Spleen (tissue), 13 donors: ENCODE measurements at regions of chr1 and their contacts with region 1.

Region 1: GRCh38 chr1:153572569-153573015 is 6.9 kb upstream of the S100A2 start:
- DNase-seq: peak; percentile 91
- H3K4me3 ChIP-seq: no peak overlapping the region
- H3K27ac ChIP-seq: peak overlapping the region; percentile 29 to 71 (median 54)
- H3K4me1 ChIP-seq: peaks cover 18 to 54% (median 30%) of the 10 kb centered on the region in 6 donors
- H3K27me3 ChIP-seq: peaks cover 0 to 13% (median 0%) of the 10 kb centered on the region in 7 donors
- CTCF ChIP-seq: peak; percentile 53 to 92 (median 84)
- POLR2A ChIP-seq: no peak

Region 2: GRCh38 chr1:153352523-153352922 is 220.1 kb before region 1 on chr1:
- intact Hi-C with region 1: loop called (anchors 10 kb)
- DNase-seq: peak; percentile 88
- H3K4me3 ChIP-seq: no peak overlapping the region
- H3K27ac ChIP-seq: no peak overlapping the region
- H3K4me1 ChIP-seq: peaks cover 2 to 45% (median 8%) of the 10 kb centered on the region in 6 donors
- H3K27me3 ChIP-seq: peaks cover 0 to 69% (median 11%) of the 10 kb centered on the region in 7 donors
- CTCF ChIP-seq: peak; percentile 78 to 97 (median 91)
- POLR2A ChIP-seq: no peak

Region 3: GRCh38 chr1:153510984-153511410 is 61.6 kb before region 1 on chr1:
- intact Hi-C with region 1: loop called (anchors 1 kb)
- DNase-seq: peak; percentile 94
- H3K4me3 ChIP-seq: no peak overlapping the region
- H3K27ac ChIP-seq: no peak overlapping the region
- H3K4me1 ChIP-seq: peaks cover 0 to 41% (median 16%) of the 10 kb centered on the region in 6 donors
- H3K27me3 ChIP-seq: no peaks in the 10 kb centered on the region
- CTCF ChIP-seq: peak; percentile 75 to 91 (median 87)
- POLR2A ChIP-seq: no peak

Region 4: DNA sequence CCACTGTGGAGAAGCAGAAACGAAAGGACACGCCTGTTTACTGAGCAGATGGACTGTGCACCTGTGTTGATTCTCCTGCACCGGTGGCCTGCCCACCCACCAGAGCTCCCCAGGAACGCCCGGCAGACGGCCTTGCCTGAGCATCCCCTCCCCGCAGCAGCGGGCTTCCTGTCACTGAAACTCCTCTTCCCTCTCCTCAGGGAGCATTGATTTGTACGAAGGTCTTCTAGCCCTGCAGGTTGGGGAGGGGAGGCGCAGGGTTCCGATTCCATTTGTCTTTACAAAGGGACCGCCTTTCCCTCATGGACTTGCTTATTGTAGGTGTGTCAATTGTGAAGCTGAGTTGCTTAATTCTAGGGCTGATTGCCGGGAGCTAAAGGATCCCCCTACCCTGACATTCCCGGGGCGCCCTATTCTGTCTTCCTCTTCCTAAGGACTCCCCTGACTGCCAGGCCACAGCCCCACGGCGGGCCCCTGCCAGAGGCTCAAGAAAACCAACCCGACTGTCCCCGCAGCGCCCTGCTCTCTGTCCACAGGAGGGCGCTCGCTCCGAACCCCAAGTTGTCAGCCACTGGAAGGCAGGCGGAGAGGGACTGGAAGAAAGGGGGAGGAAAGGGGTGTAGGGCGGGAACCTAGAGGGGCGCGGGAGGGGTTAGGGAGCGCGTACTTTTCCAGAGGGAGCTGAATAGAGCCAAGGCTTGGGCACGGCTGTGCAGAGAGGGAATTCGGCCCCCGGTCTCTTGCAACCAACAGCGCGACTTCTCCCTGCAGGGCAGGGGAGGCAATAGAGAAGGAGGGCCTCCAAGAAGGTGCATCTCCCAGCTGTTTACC is 39.6 kb before region 1 on chr1:
- intact Hi-C with region 1: loop called (anchors 5 kb)
- DNase-seq: peak; percentile 94
- H3K4me3 ChIP-seq: peak overlapping the region in 5 of 8 donors; percentile 15 to 84 (median 69)
- H3K27ac ChIP-seq: peak overlapping the region; percentile 7 to 99 (median 95)
- H3K4me1 ChIP-seq: peaks cover 21 to 67% (median 52%) of the 10 kb centered on the region in 6 donors
- H3K27me3 ChIP-seq: no peaks in the 10 kb centered on the region
- CTCF ChIP-seq: peak; percentile 54 to 93 (median 79)
- POLR2A ChIP-seq: no peak

Region 5: DNA sequence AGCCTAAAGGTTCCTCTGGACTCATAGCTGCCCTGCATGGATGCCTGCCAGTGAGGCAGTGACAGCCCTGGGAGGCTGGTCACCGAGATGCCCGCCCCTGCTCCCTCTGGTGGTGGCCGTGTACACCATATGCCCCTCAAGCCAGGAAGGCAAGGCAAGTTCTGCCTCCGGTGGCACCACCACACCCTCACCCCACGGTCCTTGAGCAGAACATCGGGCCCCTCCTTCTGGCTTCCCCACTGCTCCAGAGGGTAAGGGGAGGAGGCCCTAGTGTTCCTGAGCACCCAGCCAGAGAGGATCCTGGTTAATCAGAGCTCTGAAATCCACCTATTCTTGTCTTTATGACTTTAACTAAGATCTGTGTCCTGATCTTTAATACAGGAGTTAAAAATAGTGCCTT is 45.1 kb after region 1 on chr1:
- intact Hi-C with region 1: loop called (anchors 5 kb)
- DNase-seq: peak; percentile 95
- H3K4me3 ChIP-seq: peak overlapping the region in 1 of 8 donors; percentile 4
- H3K27ac ChIP-seq: peak overlapping the region in 7 of 8 donors; percentile 32 to 90 (median 48)
- H3K4me1 ChIP-seq: peaks cover 12 to 56% (median 35%) of the 10 kb centered on the region in 6 donors
- H3K27me3 ChIP-seq: no peaks in the 10 kb centered on the region
- CTCF ChIP-seq: peak in 9 of 11 experiments; percentile 51 to 90 (median 76)
- POLR2A ChIP-seq: no peak